ENCODE measurements at regions of chr13 and their contacts with region 1.

Region 1: DNA sequence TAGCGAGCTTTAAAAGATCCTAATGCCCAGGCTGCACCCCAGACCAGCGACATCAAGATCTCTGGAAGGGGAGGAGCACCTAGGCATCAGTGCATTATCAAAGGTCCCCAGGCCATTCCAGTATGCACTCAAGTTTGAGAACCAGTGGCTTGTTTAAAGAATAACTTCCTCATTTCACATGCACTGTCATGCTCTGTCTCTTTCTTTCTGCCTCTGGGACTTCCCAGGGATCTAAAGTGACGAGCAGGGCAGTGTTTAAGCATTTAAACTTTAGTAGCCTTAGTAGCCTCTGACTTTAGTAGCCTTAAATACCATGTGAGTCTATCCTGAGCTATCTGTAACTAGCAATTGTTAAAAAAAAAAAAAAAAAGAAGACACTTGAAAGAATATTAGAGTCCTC is 8.9 kb upstream of the FARP1 start:
- DNase-seq: no peak
- ATAC-seq: no peak
- H3K4me3 ChIP-seq: no peak overlapping the region
- H3K27ac ChIP-seq: no peak overlapping the region
- H3K4me1 ChIP-seq: no peaks in the 10 kb centered on the region
- H3K27me3 ChIP-seq: no peaks in the 10 kb centered on the region
- CTCF ChIP-seq: no peak
- POLR2A ChIP-seq: no peak

Region 2: GRCh38 chr13:97866346-97866745 is 267.6 kb before region 1 on chr13:
- intact Hi-C with region 1: loop called (anchors 10 kb)
- DNase-seq: no peak
- ATAC-seq: no peak
- H3K4me3 ChIP-seq: no peak overlapping the region
- H3K27ac ChIP-seq: no peak overlapping the region
- H3K4me1 ChIP-seq: no peaks in the 10 kb centered on the region
- H3K27me3 ChIP-seq: no peaks in the 10 kb centered on the region
- CTCF ChIP-seq: no peak
- POLR2A ChIP-seq: no peak

Region 3: GRCh38 chr13:98445340-98446233 is 311.6 kb after region 1 on chr13:
- intact Hi-C with region 1: no loop called
- DNase-seq: peak; percentile 64 to 79 (median 72)
- ATAC-seq: peak; percentile 84
- H3K4me3 ChIP-seq: no peak overlapping the region
- H3K27ac ChIP-seq: peak overlapping the region in 2 of 4 donors; percentile 9 to 29
- H3K4me1 ChIP-seq: no peaks in the 10 kb centered on the region
- H3K27me3 ChIP-seq: no peaks in the 10 kb centered on the region
- CTCF ChIP-seq: peak; percentile 87 to 97 (median 94)
- POLR2A ChIP-seq: no peak

Region 4: DNA sequence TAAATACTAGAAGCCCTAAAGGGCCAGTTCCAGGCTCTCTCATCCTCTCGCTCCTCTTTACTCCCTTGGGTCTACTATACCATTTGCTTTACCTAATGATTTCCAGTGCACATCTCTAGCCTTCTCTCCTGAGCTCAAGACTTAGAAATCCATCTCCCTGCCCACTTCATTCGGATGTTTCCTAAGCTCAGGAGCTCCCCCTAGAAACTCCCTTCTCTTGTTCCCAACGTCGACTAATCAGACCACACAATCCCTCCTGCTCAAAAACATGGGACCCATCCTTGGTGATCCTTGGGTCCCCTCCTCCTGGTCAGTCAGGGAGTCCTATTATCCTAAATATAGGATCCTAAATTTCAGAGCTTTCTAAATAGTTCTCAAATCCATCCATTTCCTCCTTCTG is 464.1 kb after region 1 on chr13:
- intact Hi-C with region 1: no loop called
- DNase-seq: no peak
- ATAC-seq: no peak
- H3K4me3 ChIP-seq: no peak overlapping the region
- H3K27ac ChIP-seq: no peak overlapping the region
- H3K4me1 ChIP-seq: peaks cover 18% of the 10 kb centered on the region
- H3K27me3 ChIP-seq: no peaks in the 10 kb centered on the region
- CTCF ChIP-seq: no peak
- POLR2A ChIP-seq: no peak

Region 5: DNA sequence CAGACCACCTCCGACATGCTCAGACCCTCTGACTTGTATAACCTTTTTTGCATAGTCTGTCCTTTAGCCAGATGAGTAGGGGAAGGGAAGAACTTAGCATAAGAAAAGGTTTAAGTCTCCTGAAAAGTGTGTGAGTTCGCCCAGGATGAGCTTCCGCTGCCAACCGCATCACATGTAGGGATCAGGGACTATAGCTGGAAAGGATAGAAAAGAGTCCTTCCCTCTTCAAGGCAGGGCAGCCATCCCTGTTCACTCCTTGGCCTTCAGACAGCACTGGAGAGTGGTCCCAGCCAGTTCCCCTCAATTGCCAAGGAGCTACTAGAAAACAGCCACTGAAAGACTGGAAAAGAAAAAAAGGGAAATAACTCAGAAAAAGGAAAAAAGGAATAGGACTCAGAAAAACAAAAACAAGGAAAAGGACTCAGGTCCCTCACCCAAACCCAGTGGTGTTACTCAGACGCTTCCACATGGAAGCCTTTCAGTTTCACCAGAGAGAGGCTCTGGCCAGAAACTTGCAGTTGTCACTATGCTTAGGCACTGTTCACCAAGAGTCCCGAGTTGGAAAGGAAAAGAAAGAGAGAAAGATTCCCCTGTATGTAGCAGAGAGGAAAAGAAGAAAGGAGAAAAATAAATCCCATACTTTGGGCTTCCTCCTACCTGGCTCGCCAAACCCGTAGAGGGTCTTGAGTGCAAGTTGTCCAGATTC is 1361.7 kb after region 1 on chr13:
- intact Hi-C with region 1: no loop called
- DNase-seq: no peak
- ATAC-seq: no peak
- H3K4me3 ChIP-seq: no peak overlapping the region
- H3K27ac ChIP-seq: no peak overlapping the region
- H3K4me1 ChIP-seq: peaks cover 19% of the 10 kb centered on the region
- H3K27me3 ChIP-seq: no peaks in the 10 kb centered on the region
- CTCF ChIP-seq: no peak
- POLR2A ChIP-seq: no peak